ENCODE measurements at regions of chr10 and their contacts with region 1.

Region 1: DNA sequence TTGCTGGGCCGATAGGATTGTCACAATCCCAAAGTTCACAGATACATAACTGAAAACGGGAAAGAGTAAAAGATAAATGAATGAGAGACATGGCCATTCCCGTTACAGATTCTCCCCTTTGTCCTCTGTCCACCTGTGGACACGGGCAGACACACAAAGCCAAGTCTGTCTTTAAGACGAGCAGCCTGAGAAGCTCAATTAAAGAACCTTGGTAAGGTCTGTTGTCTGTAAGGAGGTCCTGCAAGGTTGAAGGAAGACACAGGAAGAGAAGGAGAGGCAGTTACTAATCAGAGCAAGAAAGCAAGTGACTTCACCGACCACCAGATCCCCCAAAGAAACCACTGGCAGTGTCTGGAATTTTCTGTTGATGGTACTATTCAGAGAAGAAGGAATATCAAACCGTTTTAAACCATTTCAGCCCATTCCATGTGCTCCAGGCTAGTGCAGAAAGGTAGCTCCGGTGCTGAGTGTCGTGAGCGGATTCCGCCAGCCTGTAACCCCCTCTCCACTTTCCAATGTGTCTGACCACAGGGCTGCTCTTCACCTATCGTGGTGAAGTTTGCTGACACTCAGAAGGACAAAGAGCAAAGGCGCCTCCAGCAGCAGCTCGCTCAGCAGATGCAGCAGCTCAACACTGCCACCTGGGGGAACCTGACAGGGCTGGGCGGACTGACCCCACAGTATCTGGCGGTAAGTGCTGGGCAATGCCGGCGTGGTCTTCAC is 252.6 kb downstream of the CELF2 start:
- DNase-seq: peak; percentile 66 to 88 (median 76)
- ATAC-seq: peak; percentile 100
- H3K4me3 ChIP-seq: no peak overlapping the region
- H3K27ac ChIP-seq: no peak overlapping the region
- H3K4me1 ChIP-seq: peaks cover 0 to 6% of the 10 kb centered on the region in 2 experiments; a peak in 2 of 5 replicates
- H3K27me3 ChIP-seq: no peaks in the 10 kb centered on the region
- CTCF ChIP-seq: peak; percentile 92 to 96 (median 96)
- EP300 ChIP-seq: no peak
- POLR2A ChIP-seq: no peak
- RAD21 ChIP-seq: peak; percentile 95 to 96

Region 2: DNA sequence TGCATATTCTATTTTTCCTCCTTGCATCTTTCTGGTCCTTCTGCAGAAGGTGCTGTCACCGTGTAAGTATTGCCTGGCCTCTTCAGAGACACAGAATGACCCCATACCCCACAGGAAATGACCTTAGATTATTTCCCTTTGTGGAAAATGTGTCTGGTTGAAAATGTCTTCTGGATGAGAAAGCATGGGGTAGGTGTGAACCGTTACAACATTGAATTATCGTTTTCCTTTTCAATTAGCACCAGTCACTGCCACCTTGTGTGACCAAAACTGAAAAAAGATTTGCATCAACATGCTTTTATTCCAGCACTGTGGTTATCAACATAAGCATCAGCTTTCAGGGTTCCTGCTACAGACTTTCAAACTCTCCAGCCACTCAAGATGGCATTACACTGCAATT is 310.6 kb before region 1 on chr10:
- CTCF ChIA-PET with region 1: no interaction called
- POLR2A ChIA-PET with region 1: no interaction called
- in situ Hi-C with region 1: no loop called
- intact Hi-C with region 1: loop called (anchors 10 kb)
- DNase-seq: no peak
- ATAC-seq: no peak
- H3K4me3 ChIP-seq: no peak overlapping the region
- H3K27ac ChIP-seq: no peak overlapping the region
- H3K4me1 ChIP-seq: no peaks in the 10 kb centered on the region
- H3K27me3 ChIP-seq: no peaks in the 10 kb centered on the region; a peak in 1 of 5 replicates
- CTCF ChIP-seq: no peak
- EP300 ChIP-seq: no peak
- POLR2A ChIP-seq: no peak
- RAD21 ChIP-seq: no peak

Region 3: DNA sequence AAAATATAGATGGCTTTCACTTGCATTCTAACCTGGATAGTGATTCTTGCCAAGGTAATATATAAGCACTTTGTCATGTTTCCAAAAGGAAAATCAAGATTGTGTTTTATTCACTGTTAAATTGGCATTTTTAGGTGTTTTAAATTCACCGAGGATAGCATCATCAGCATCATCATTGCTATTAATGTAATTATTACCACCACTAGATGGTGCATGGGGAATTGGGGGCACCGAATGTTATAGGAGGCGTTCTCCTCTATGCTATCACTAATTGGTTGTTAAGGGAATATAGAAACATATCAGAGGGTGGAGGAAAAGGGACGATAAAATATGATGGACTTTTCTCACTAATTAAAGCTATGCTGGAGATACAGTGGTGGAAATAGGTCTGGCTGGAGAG is 157.1 kb before region 1 on chr10:
- CTCF ChIA-PET with region 1: no interaction called
- POLR2A ChIA-PET with region 1: no interaction called
- in situ Hi-C with region 1: no loop called
- intact Hi-C with region 1: loop called (anchors 2 kb)
- DNase-seq: peak in 3 of 4 experiments; percentile 10 to 19 (median 13)
- ATAC-seq: no peak
- H3K4me3 ChIP-seq: no peak overlapping the region
- H3K27ac ChIP-seq: no peak overlapping the region
- H3K4me1 ChIP-seq: no peaks in the 10 kb centered on the region; a peak in 1 of 5 replicates
- H3K27me3 ChIP-seq: no peaks in the 10 kb centered on the region; a peak in 1 of 5 replicates
- CTCF ChIP-seq: peak; percentile 13 to 41 (median 30); a peak in 3 of 6 replicates
- EP300 ChIP-seq: no peak
- POLR2A ChIP-seq: no peak
- RAD21 ChIP-seq: peak in 1 of 2 experiments; percentile 48; a peak in 2 of 4 replicates

Measured in K562 (cell line).